ENCODE measurements at regions of chr12 and their contacts with region 1.

Region 1: DNA sequence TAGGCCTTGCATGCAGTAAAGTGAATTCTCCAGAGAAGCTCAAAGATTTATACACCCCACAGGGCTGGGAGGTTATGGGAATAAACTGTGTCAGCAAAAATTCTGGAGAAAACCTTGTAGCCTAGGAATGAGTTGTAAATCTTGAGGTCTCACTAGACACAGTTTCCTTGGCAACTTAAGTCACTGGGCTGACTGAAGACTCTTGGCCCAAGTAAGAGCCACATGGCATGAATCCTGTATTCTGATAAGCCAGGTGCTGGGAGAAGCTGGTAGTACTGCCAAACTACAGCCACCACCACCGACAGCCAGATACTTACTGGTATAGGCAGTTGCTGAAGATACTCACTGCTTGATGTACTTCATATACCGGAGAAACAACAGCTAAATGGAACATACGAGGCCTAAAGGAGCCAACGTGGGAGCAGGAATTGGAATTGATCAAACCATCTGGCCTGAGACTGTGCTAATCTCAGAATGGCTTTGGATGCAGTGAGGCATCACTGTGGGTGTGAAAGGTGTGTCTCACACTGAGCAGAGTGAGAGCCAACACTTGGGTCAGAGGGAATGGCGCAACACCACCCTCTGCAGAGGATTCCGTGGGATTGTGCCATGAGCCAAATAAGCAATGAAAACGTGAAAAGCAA is 102.8 kb upstream of the TMCC3 start:
- DNase-seq: no peak
- ATAC-seq: peak in 2 of 8 donors; percentile 35 to 65
- H3K4me3 ChIP-seq: no peak overlapping the region
- H3K27ac ChIP-seq: no peak overlapping the region
- H3K4me1 ChIP-seq: no peaks in the 10 kb centered on the region
- H3K27me3 ChIP-seq: peaks cover 0 to 6% (median 3%) of the 10 kb centered on the region in 7 donors
- CTCF ChIP-seq: peak in 3 of 9 donors; percentile 6 to 12 (median 12)

Region 2: GRCh38 chr12:94133964-94134795 is 619.0 kb before region 1 on chr12:
- intact Hi-C with region 1: loop called in 1 of 10 experiments (anchors 10 kb)
- DNase-seq: peak in 1 of 2 donors; percentile 21
- ATAC-seq: peak in 7 of 8 donors; percentile 26 to 82 (median 74)
- H3K4me3 ChIP-seq: no peak overlapping the region
- H3K27ac ChIP-seq: no peak overlapping the region
- H3K4me1 ChIP-seq: peaks cover 0 to 3% (median 0%) of the 10 kb centered on the region in 9 donors
- H3K27me3 ChIP-seq: peaks cover 0 to 9% (median 1%) of the 10 kb centered on the region in 7 donors
- CTCF ChIP-seq: peak; percentile 76 to 89 (median 83)

Region 3: GRCh38 chr12:94560431-94561221 is 192.5 kb before region 1 on chr12:
- intact Hi-C with region 1: loop called in 1 of 10 experiments (anchors 10 kb)
- DNase-seq: no peak
- ATAC-seq: no peak
- H3K4me3 ChIP-seq: no peak overlapping the region
- H3K27ac ChIP-seq: no peak overlapping the region
- H3K4me1 ChIP-seq: no peaks in the 10 kb centered on the region
- H3K27me3 ChIP-seq: no peaks in the 10 kb centered on the region
- CTCF ChIP-seq: no peak

Region 4: DNA sequence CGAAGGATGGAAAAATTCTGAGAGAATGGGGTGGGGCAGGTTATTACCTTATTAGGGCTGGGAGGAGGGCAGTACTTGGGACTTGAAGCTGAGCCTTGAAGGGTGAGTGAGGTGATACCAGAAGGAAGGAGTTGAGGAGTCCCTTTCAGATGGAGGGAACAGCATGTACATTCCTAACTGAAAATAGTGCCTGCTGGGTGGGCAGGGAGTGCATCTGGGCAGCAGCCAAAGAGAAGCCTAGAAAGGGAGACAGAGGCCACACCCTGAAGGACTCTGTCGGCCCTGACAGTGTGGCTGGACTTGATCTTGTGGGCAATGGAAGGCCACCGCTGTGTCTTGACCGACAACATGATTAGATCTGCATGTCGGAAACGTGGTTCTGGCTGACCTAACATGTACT is 102.7 kb after region 1 on chr12:
- intact Hi-C with region 1: no loop called
- DNase-seq: no peak
- ATAC-seq: no peak
- H3K4me3 ChIP-seq: no peak overlapping the region
- H3K27ac ChIP-seq: no peak overlapping the region
- H3K4me1 ChIP-seq: no peaks in the 10 kb centered on the region
- H3K27me3 ChIP-seq: peaks cover 0 to 6% (median 4%) of the 10 kb centered on the region in 7 donors
- CTCF ChIP-seq: no peak

Measured in heart right ventricle (tissue), 16 donors.